Activated naive CD8-positive, alpha-beta T cell treated with anti-CD3 and anti-CD28 coated beads, Interleukin-2, amount 10 ng/mL, durations not matched to agents 7 days and 5 days (primary cell): ENCODE measurements at regions of chr7 and their contacts with region 1.

Region 1: DNA sequence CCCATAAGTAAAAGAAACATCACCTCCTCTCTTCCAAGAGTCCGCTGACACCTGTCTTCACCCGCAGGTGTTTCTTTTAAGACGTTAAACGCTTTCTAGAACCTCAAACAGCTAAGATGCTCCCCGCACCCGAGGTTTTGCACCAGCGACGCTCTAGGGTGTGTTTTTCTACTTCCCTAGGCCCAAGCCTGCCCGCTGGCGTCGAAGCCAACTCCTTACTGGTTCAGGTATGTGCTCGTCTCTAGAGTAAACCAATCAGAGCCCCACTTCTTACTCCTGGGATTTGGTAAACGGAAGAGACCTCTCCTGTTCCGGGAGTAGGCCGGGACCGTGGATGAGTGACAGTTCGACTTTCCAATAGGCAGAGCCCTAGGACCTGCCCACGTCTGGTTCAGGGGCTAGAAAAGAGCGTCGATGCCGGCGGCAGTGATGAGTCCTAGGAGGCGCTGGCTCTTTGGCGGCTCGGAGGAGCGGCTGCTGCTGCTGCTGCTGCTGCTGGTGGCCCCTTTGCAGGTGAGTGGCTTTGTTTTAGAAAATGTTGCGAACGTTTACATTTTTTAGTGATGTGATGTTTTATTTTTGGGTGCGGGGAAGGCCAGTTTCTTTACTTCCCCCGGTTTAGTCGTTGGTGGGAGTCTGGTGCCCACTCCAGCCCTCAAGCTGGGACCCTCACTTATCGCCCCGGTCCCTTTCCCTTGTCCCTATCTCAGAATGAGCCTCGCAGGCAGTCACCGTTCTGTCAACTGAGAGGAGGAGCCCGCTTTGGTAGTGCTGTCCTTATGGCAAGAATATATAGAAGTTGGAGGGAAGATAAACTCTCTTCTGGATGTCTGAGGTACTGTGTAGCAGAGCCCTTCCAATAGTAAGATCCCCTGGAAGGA is at the start of gene BPGM:
- DNase-seq: peak; percentile 88
- ATAC-seq: peak; percentile 99
- H3K4me3 Mint-ChIP-seq: no peak within 1 kb of the TSS
- H3K27ac Mint-ChIP-seq: no peak within 1 kb of the TSS
- H3K4me1 Mint-ChIP-seq: peaks cover 14% of the 10 kb centered on the region
- H3K27me3 Mint-ChIP-seq: no peaks in the 10 kb centered on the region
- total RNA-seq, gene BPGM: 13.1 to 13.2 TPM

Region 2: DNA sequence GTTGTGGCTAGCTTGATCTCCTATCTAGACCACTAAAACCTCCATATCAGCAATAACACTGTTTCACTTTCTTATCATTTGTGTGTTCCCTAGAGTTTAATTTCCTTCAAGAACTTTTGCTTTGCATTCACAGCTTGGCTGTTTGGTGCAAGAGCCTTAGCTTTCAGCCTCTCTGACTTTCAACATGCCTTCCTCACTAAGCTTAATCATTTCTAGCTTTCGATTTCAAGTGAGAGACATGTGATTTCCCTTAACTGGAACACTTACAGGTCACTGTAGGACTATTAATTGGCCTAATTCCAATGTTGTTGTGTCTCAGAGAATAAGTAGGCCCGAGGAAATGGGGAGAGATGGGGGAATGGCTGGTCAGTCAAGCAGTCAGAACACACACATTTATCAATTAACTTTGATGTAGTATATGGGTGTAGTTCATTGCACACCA is 10.6 kb before region 1 on chr7:
- POLR2A ChIA-PET with region 1: interaction called, 11 read pairs
- DNase-seq: no peak
- ATAC-seq: peak; percentile 58
- H3K4me3 Mint-ChIP-seq: peak overlapping the region; percentile 18
- H3K27ac Mint-ChIP-seq: peak overlapping the region; percentile 66
- H3K4me1 Mint-ChIP-seq: peaks cover 18% of the 10 kb centered on the region
- H3K27me3 Mint-ChIP-seq: peaks cover 4% of the 10 kb centered on the region

Region 3: DNA sequence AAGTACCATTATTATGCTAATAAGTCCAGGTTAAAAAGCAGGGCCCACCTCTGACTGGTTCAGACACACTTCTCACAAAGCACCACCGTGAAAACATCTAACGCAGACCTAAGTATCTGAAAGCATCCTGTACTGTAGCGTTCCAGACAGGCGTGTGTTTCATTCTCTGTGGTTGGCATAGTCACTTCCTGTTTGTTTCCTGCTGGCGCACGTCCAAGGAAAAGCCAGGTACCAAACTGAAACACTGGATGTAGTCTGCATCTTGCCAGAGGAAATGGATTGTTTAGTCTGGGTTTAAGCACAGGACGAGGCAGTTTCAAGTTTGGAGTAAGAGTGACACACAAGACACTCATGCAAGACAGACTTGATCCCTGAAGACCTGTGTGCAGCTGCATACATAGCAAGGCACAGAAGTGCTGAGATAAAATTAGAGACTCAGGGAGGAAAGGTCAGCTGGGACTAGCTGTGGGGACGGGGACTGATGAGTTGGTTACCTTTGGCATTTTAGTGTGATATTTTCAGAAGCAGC is 23.2 kb after region 1 on chr7:
- POLR2A ChIA-PET with region 1: interaction called, 10 read pairs
- DNase-seq: peak; percentile 41
- ATAC-seq: peak; percentile 87
- H3K4me3 Mint-ChIP-seq: peak overlapping the region; percentile 69
- H3K27ac Mint-ChIP-seq: peak overlapping the region; percentile 76
- H3K4me1 Mint-ChIP-seq: peaks cover 25% of the 10 kb centered on the region
- H3K27me3 Mint-ChIP-seq: no peaks in the 10 kb centered on the region

Region 4: DNA sequence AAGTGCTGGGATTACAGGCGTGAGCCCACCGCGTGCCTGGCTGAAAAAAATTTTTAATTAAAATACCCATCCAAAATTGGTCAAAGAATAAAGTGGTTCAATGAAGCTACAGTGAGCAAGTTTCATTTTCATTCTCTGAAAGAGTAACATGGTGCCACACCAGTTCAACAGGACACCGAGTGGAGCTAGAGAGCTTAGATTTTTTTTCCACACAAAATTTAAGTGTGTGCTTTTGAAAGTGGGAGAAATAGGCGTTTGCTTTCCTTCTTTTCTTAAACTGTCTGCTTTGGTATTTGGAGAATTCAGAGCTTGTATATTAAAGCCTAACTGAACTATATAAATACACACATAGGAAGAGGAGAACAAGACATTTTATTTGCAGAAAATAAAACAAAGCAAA is 43.4 kb after region 1 on chr7:
- POLR2A ChIA-PET with region 1: interaction called, 12 read pairs
- DNase-seq: no peak
- ATAC-seq: peak; percentile 61
- H3K4me3 Mint-ChIP-seq: no peak overlapping the region
- H3K27ac Mint-ChIP-seq: no peak overlapping the region
- H3K4me1 Mint-ChIP-seq: peaks cover 29% of the 10 kb centered on the region
- H3K27me3 Mint-ChIP-seq: no peaks in the 10 kb centered on the region